Activated naive CD4-positive, alpha-beta T cell treated with anti-CD3 and anti-CD28 coated beads, Interleukin-2, amount 10 ng/mL, durations not matched to agents 7 days and 5 days (primary cell): ENCODE measurements at regions of chr1 and their contacts with region 1.

Region 1: DNA sequence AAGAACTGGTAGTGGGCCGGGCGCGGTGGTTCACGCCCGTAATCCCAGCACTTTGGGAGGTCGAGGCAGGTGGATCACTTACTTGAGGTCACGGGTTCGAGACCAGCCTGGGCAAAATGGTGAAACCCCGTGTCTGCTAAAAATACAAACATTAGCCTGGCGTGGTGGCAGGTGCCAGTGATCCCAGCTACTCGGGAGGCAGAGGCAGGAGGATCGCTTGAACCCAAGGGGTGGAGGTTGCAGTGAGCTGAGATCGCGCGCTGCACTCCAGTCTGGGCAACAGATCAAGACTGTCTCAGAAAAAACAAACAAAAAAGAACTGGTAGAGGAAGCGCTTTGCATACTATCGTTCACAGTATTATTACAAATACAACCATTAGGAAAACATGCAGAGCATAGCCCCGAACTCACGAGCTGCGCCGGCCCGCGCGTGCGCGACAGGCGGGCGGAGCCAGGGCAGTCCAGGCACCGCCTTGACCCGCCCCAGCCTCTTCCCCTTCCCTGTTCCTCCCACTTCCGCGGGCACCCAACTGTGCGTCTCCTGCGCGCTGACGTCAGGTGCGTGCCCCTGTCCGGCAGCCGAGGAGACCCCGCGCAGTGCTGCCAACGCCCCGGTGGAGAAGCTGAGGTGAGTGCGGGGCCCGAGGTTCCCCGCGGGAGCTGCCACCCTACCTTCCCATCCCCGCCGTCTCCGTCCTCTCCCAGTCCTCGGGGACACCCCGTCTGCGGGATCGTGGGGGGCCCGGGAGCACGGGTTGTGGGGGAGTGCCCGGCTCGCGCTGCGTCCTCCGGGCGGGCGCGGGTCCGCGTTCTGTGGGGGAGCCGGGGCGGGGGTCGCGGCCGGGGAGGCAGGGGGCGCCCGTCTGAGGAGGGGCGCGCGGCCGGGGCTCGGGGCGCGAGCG is at the start of gene CDC42:
- DNase-seq: peak; percentile 98
- H3K4me3 Mint-ChIP-seq: peak within 1 kb of the TSS; percentile 99
- H3K27ac Mint-ChIP-seq: peak within 1 kb of the TSS; percentile 100
- H3K4me1 Mint-ChIP-seq: peaks cover 69% of the 10 kb centered on the region
- H3K27me3 Mint-ChIP-seq: peaks cover 4% of the 10 kb centered on the region

Region 2: GRCh38 chr1:22025368-22026155 is 26.8 kb before region 1 on chr1:
- CTCF ChIA-PET with region 1: interaction called, 19 read pairs
- DNase-seq: peak; percentile 94
- H3K4me3 Mint-ChIP-seq: peak overlapping the region; percentile 88
- H3K27ac Mint-ChIP-seq: peak overlapping the region; percentile 97
- H3K4me1 Mint-ChIP-seq: peaks cover 72% of the 10 kb centered on the region
- H3K27me3 Mint-ChIP-seq: no peaks in the 10 kb centered on the region

Region 3: GRCh38 chr1:22039594-22040285 is 12.6 kb before region 1 on chr1:
- CTCF ChIA-PET with region 1: interaction called, 12 read pairs
- DNase-seq: peak; percentile 96
- H3K4me3 Mint-ChIP-seq: peak overlapping the region; percentile 67
- H3K27ac Mint-ChIP-seq: peak overlapping the region; percentile 100
- H3K4me1 Mint-ChIP-seq: peaks cover 58% of the 10 kb centered on the region
- H3K27me3 Mint-ChIP-seq: no peaks in the 10 kb centered on the region